Esophagus squamous epithelium (tissue), 5 donors: ENCODE measurements at regions of chr18 and their contacts with region 1.

Region 1: GRCh38 chr18:23131693-23132319 is 3.5 kb upstream of the CABLES1 start:
- DNase-seq: no peak
- H3K4me3 ChIP-seq: no peak overlapping the region
- H3K27ac ChIP-seq: no peak overlapping the region
- H3K4me1 ChIP-seq: peaks cover 10 to 30% (median 12%) of the 10 kb centered on the region in 3 donors
- H3K27me3 ChIP-seq: peaks cover 0 to 17% (median 0%) of the 10 kb centered on the region in 4 donors
- CTCF ChIP-seq: peak; percentile 69 to 84 (median 82)
- POLR2A ChIP-seq: no peak

Region 2: DNA sequence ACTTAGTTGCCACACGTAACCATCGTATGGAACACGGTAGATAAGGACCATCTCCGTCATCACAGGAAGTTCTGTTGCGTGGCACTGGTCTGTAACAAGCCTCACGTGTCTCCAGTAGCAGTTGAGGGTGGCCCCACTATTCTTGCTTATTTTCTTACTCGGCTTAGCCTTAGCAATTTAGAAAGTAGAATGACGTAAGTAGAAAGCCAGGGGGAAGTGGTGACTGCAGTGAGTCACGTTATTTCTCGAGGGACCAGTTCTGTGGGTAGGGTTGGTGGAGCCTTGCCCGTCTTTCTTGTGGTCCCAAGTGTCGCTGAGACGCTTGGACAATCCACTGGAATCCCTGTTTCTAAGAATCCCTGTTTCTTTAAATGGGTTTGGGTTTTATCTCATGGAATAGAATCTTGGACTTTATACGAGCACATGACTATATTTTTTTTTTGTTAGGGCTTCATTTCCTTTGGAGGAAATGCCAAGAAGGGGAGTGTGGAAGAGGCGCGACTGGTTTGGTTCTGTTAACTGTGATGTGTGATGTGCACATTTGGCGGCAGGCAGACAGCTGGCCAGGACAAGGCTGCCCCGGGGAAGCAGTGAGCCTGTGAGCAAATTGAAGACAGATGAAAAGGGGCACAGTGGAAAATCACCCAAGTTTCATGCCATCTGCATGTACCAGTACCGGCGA is 99.7 kb after region 1 on chr18:
- intact Hi-C with region 1: loop called (anchors 10 kb)
- DNase-seq: peak; percentile 37
- H3K4me3 ChIP-seq: no peak overlapping the region
- H3K27ac ChIP-seq: peak overlapping the region; percentile 33 to 83 (median 71)
- H3K4me1 ChIP-seq: peaks cover 23 to 60% (median 41%) of the 10 kb centered on the region in 3 donors
- H3K27me3 ChIP-seq: no peaks in the 10 kb centered on the region
- CTCF ChIP-seq: no peak
- POLR2A ChIP-seq: no peak

Region 3: GRCh38 chr18:23798249-23798648 is 666.4 kb after region 1 on chr18:
- intact Hi-C with region 1: no loop called
- DNase-seq: no peak
- H3K4me3 ChIP-seq: no peak overlapping the region
- H3K27ac ChIP-seq: no peak overlapping the region
- H3K4me1 ChIP-seq: no peaks in the 10 kb centered on the region
- H3K27me3 ChIP-seq: no peaks in the 10 kb centered on the region
- CTCF ChIP-seq: no peak
- POLR2A ChIP-seq: no peak